ENCODE measurements at regions of chr3 and their contacts with region 1.

Region 1: DNA sequence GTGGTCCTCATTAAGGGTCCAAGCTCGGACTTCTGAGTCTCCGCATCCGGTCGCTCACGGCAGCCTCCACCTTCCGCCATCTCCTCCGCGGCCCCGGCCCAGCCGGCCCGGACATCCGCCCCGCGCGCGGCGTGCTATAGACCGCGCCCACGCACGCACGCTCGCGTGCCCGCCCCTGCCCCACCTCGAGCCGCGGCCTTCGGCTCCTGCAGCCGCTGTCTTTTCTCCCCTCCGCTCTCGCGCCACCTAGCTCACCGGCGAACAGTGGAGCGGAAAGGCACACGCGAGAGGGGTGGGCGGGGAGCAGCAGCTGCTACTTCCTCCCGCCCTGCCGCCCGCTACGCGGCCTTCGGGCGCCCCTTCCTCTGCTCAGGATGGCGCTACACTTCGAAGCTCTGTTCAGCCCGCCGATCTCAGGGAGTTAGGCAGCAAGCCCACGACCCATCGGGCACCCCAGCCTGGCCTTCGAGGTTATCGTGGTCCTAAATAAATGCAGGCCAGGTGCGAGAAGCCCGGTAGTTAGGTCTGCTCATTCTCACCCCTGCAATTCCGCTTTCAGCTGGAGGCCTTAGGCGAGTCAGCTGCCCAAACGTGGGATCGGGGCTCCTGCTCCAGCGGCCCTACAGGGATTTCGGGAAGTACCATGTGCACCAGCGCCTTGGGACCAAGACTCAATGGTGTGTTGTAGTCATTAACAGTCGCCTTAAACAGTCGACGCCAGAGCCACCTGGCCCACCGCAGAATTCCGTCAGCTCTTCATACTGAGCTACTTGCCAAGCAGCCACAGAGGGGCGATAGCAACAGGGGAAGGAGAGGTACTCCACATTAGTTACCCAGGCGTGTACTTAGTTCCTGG is at the start of gene USP4:
- DNase-seq: peak; percentile 96
- ATAC-seq: peak; percentile 86
- H3K4me3 ChIP-seq: peak within 1 kb of the TSS; percentile 82 to 96 (median 90)
- H3K4me3 Mint-ChIP-seq: peak within 1 kb of the TSS; percentile 83
- H3K27ac ChIP-seq: peak within 1 kb of the TSS; percentile 96 to 99
- H3K27ac Mint-ChIP-seq: peak within 1 kb of the TSS; percentile 97
- H3K4me1 ChIP-seq: peaks cover 60 to 70% of the 10 kb centered on the region in 2 donors
- H3K4me1 Mint-ChIP-seq: peaks cover 53% of the 10 kb centered on the region
- H3K27me3 ChIP-seq: no peaks in the 10 kb centered on the region
- H3K27me3 Mint-ChIP-seq: no peaks in the 10 kb centered on the region
- CTCF ChIP-seq: no peak
- total RNA-seq, gene USP4: 113 and 116 TPM in 2 replicates

Region 2: DNA sequence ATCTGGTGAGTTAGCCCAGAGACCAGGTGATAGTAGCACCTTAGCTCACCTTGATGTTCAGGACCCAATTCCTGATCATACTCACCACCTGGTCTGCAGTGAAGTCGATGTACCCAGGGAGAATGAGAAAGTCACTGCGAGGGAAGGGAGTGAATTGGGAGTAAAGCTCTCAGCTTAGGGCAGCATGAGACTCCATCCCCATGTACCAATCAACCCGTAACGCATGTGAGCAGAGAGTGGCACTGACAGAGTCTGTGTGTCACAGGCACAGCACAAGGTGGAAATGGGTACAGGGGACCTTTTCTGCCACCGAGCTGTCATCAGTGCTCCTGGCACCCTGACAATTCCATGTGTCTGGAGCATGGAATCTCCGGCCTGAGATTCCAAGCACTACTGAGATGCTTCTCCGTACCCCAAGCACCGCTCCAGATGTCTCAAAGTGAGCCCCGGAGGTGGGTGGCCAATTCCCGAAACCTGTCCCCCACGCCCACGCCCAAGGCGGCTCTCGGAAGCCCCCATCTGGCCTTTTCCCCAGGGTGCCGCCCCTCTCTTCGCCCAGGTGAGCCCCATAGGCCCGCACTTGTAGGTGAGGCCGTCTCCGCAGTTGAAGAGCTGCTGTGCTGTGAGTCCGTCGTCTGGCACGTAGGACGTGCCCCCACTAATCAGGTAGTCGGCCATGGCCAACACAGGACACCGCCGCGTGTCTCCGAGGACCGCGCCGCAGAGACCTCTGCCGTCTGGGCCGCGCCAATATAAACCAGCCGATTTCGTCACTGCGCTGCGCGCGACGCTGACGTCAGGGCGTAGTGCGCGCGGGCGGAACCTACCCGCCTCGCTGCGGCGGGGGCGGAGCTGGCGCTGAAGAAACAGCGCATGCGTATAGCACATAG is 311.3 kb before region 1 on chr3 and contains the start of gene IMPDH2:
- CTCF ChIA-PET with region 1: no interaction called
- POLR2A ChIA-PET with region 1: no interaction called
- intact Hi-C with region 1: loop called (anchors 5 kb)
- DNase-seq: peak; percentile 98
- ATAC-seq: peak; percentile 93
- H3K4me3 ChIP-seq: peak within 1 kb of the TSS; percentile 72 to 93 (median 73)
- H3K4me3 Mint-ChIP-seq: peak within 1 kb of the TSS; percentile 98
- H3K27ac ChIP-seq: peak within 1 kb of the TSS; percentile 86 to 92
- H3K27ac Mint-ChIP-seq: peak within 1 kb of the TSS; percentile 98
- H3K4me1 ChIP-seq: peaks cover 14 to 39% of the 10 kb centered on the region in 2 donors
- H3K4me1 Mint-ChIP-seq: peaks cover 45% of the 10 kb centered on the region
- H3K27me3 ChIP-seq: no peaks in the 10 kb centered on the region
- H3K27me3 Mint-ChIP-seq: no peaks in the 10 kb centered on the region
- CTCF ChIP-seq: no peak
- total RNA-seq, gene IMPDH2: 186 and 193 TPM in 2 replicates

Region 3: DNA sequence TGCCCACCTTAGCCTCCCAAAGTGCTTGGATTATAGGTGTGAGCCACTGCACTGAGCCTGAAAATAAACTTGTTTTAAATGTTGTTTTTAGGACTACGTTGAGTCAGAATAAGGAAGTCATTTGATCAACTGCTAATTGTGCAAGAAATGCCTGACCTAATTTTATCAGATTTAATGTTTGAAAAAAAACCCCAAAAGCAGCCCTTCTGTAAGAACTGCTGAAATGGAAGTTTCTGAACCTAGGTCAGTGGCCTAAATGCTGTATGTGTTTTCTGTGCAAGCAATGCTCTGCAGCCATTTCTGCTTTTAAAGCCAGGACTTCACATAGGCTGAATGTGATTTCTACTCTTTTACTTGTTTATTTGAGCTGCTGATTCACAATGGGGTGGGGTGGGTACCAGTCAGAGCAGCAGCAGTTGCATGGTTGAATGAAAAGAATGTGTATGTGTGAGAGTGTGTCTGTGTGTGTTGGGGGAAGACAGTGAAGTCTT is 11.4 kb after region 1 on chr3:
- CTCF ChIA-PET with region 1: interaction called, 65 read pairs
- POLR2A ChIA-PET with region 1: interaction called, 47 read pairs
- intact Hi-C with region 1: no loop called
- DNase-seq: no peak
- ATAC-seq: peak; percentile 45
- H3K4me3 ChIP-seq: no peak overlapping the region
- H3K4me3 Mint-ChIP-seq: peak overlapping the region; percentile 28
- H3K27ac ChIP-seq: no peak overlapping the region
- H3K27ac Mint-ChIP-seq: peak overlapping the region; percentile 75
- H3K4me1 ChIP-seq: peaks cover 38 to 51% of the 10 kb centered on the region in 2 donors
- H3K4me1 Mint-ChIP-seq: peaks cover 48% of the 10 kb centered on the region
- H3K27me3 ChIP-seq: no peaks in the 10 kb centered on the region
- H3K27me3 Mint-ChIP-seq: no peaks in the 10 kb centered on the region
- CTCF ChIP-seq: no peak

Region 4: DNA sequence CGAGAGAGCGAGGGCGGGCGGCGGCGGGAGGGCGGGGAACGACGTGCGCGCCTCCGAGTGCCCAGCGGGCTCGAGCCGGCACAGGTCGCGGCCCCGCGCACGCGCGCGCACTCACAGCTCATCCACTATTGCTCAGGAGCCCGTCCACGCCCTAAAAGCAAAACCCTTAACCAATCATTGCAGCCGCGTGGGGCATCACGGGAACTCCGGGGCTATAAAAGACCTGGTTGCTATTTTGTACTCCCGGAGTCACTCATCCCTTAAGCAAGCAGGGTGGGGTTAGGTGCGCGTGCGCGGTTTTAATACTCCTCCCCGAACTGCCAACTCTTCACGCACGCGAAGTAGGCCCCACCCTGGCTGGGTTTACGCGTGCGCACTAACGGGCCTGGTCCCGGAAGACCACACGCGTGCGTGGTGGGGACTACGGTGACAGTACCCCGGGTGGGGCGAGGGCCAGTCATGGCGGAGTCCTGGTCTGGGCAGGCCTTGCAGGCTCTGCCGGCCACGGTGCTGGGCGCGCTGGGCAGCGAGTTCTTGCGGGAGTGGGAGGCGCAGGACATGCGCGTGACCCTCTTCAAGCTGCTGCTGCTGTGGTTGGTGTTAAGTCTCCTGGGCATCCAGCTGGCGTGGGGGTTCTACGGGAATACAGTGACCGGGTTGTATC is 71.9 kb after region 1 on chr3 and contains the starts of genes RHOA and TCTA:
- CTCF ChIA-PET with region 1: interaction called, 27 read pairs
- POLR2A ChIA-PET with region 1: interaction called, 45 read pairs
- intact Hi-C with region 1: loop called (anchors 1 kb)
- DNase-seq: peak; percentile 100
- ATAC-seq: peak; percentile 77
- H3K4me3 ChIP-seq: peak within 1 kb of the TSS; percentile 74 to 96 (median 90)
- H3K4me3 Mint-ChIP-seq: peak within 1 kb of the TSS; percentile 96
- H3K27ac ChIP-seq: peak within 1 kb of the TSS; percentile 90 to 97
- H3K27ac Mint-ChIP-seq: peak within 1 kb of the TSS; percentile 96
- H3K4me1 ChIP-seq: peaks cover 71 to 83% of the 10 kb centered on the region in 2 donors
- H3K4me1 Mint-ChIP-seq: peaks cover 74% of the 10 kb centered on the region
- H3K27me3 ChIP-seq: no peaks in the 10 kb centered on the region
- H3K27me3 Mint-ChIP-seq: no peaks in the 10 kb centered on the region
- CTCF ChIP-seq: no peak
- total RNA-seq, gene RHOA: 298 and 306 TPM in 2 replicates
- total RNA-seq, gene TCTA: 46.4 and 49.3 TPM in 2 replicates

Region 5: GRCh38 chr3:49445381-49445780 is 105.2 kb after region 1 on chr3:
- CTCF ChIA-PET with region 1: interaction called, 137 read pairs
- POLR2A ChIA-PET with region 1: interaction called, 11 read pairs
- intact Hi-C with region 1: loop called (anchors 1 kb)
- DNase-seq: no peak
- ATAC-seq: no peak
- H3K4me3 ChIP-seq: no peak overlapping the region
- H3K4me3 Mint-ChIP-seq: no peak overlapping the region
- H3K27ac ChIP-seq: no peak overlapping the region
- H3K27ac Mint-ChIP-seq: peak overlapping the region; percentile 26
- H3K4me1 ChIP-seq: peaks cover 18 to 27% of the 10 kb centered on the region in 2 donors
- H3K4me1 Mint-ChIP-seq: peaks cover 15% of the 10 kb centered on the region
- H3K27me3 ChIP-seq: no peaks in the 10 kb centered on the region
- H3K27me3 Mint-ChIP-seq: no peaks in the 10 kb centered on the region
- CTCF ChIP-seq: no peak

Region 6: GRCh38 chr3:49469936-49470713 is 130.0 kb after region 1 on chr3 and contains the start of gene DAG1:
- CTCF ChIA-PET with region 1: interaction called, 9 read pairs
- POLR2A ChIA-PET with region 1: interaction called, 16 read pairs
- intact Hi-C with region 1: loop called (anchors 1 kb)
- DNase-seq: peak; percentile 98
- ATAC-seq: peak; percentile 83
- H3K4me3 ChIP-seq: peak within 1 kb of the TSS; percentile 56 to 94 (median 70)
- H3K4me3 Mint-ChIP-seq: peak within 1 kb of the TSS; percentile 95
- H3K27ac ChIP-seq: peak within 1 kb of the TSS; percentile 90 to 94
- H3K27ac Mint-ChIP-seq: peak within 1 kb of the TSS; percentile 97
- H3K4me1 ChIP-seq: peaks cover 22 to 24% of the 10 kb centered on the region in 2 donors
- H3K4me1 Mint-ChIP-seq: peaks cover 21% of the 10 kb centered on the region
- H3K27me3 ChIP-seq: no peaks in the 10 kb centered on the region
- H3K27me3 Mint-ChIP-seq: no peaks in the 10 kb centered on the region
- CTCF ChIP-seq: no peak
- total RNA-seq, gene DAG1: 27.2 and 27.3 TPM in 2 replicates

Region 7: GRCh38 chr3:50100956-50101845 is 761.0 kb after region 1 on chr3:
- CTCF ChIA-PET with region 1: no interaction called
- POLR2A ChIA-PET with region 1: interaction called, 11 read pairs
- intact Hi-C with region 1: no loop called
- DNase-seq: no peak
- ATAC-seq: no peak
- H3K4me3 ChIP-seq: no peak overlapping the region
- H3K4me3 Mint-ChIP-seq: no peak overlapping the region
- H3K27ac ChIP-seq: no peak overlapping the region
- H3K27ac Mint-ChIP-seq: no peak overlapping the region
- H3K4me1 ChIP-seq: no peaks in the 10 kb centered on the region
- H3K4me1 Mint-ChIP-seq: no peaks in the 10 kb centered on the region
- H3K27me3 ChIP-seq: no peaks in the 10 kb centered on the region
- H3K27me3 Mint-ChIP-seq: no peaks in the 10 kb centered on the region
- CTCF ChIP-seq: no peak